GM12878 (cell line): ENCODE measurements at regions of chr19 and their contacts with region 1.

Region 1: DNA sequence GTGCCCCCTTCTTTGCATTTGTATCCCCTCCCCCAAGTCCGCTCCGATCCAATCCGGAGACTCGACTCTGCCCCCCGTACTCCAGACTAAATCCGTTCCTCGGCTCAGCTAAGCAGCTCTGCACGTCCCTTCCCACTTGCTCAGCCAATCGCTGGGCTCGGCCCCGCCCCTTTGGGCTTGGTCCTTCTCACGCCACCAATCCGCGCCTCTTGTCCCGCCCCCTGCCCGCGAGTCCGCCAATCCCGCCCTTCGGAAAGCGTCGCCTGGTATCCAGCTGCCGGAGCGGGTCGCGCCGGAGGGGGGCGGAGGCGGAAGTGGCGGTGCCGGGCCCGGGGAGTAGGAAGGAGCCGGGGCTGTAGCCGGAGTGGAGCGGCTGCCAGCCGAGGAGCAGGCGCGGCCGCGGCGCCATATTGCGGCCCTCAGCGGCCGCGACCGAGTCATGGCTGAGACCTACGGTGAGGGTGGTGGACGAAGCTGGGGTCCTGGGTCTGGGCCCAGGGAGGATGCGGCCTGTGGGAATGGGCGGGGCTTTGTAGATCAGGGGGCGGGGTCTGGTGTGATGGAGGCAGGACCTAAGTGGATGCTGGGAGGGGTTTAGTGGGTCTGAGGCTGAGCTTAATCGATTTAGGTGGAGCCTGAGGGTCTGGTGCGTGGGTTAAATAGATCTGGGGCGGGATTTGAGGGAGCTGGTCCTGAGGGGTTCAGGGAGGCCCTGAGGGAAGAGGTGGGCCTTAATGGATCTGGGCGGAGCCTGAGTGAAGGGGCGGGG is at the start of gene RAB4B:
- DNase-seq: peak; percentile 99
- ATAC-seq: peak; percentile 87
- H3K4me3 ChIP-seq: peak within 1 kb of the TSS; percentile 70
- H3K27ac ChIP-seq: peak within 1 kb of the TSS; percentile 100
- H3K4me1 ChIP-seq: peaks cover 39% of the 10 kb centered on the region
- H3K27me3 ChIP-seq: no peaks in the 10 kb centered on the region
- CTCF ChIP-seq: no peak
- EP300 ChIP-seq: peak in 1 of 2 experiments; percentile 18; a peak in 1 of 4 replicates
- POLR2A ChIP-seq: peak; percentile 95
- RAD21 ChIP-seq: no peak
- polyA plus RNA-seq, gene RAB4B: 0.60 to 3.2 TPM

Region 2: GRCh38 chr19:40640744-40641143 is 137.4 kb before region 1 on chr19:
- CTCF ChIA-PET with region 1: no interaction called
- POLR2A ChIA-PET with region 1: no interaction called
- RAD21 ChIA-PET with region 1: no interaction called
- SMC1A ChIA-PET with region 1: no interaction called
- in situ Hi-C with region 1: no loop called
- intact Hi-C with region 1: no loop called
- DNase-seq: no peak
- ATAC-seq: no peak
- H3K4me3 ChIP-seq: no peak overlapping the region
- H3K27ac ChIP-seq: no peak overlapping the region
- H3K4me1 ChIP-seq: peaks cover 5% of the 10 kb centered on the region; the same call in 1 of the 2 replicates
- H3K27me3 ChIP-seq: no peaks in the 10 kb centered on the region
- CTCF ChIP-seq: no peak
- EP300 ChIP-seq: no peak
- POLR2A ChIP-seq: no peak
- RAD21 ChIP-seq: no peak

Region 3: GRCh38 chr19:40690693-40691420 is 87.3 kb before region 1 on chr19:
- CTCF ChIA-PET with region 1: interaction called, 4 read pairs
- POLR2A ChIA-PET with region 1: interaction called, 10 read pairs
- RAD21 ChIA-PET with region 1: interaction called, 12 read pairs
- SMC1A ChIA-PET with region 1: interaction called, 4 read pairs
- in situ Hi-C with region 1: no loop called
- intact Hi-C with region 1: no loop called
- DNase-seq: peak; percentile 53
- ATAC-seq: peak; percentile 91
- H3K4me3 ChIP-seq: peak overlapping the region; percentile 92
- H3K27ac ChIP-seq: peak overlapping the region; percentile 72
- H3K4me1 ChIP-seq: peaks cover 26% of the 10 kb centered on the region
- H3K27me3 ChIP-seq: no peaks in the 10 kb centered on the region
- CTCF ChIP-seq: no peak
- EP300 ChIP-seq: no peak
- POLR2A ChIP-seq: peak; percentile 81
- RAD21 ChIP-seq: no peak

Region 4: DNA sequence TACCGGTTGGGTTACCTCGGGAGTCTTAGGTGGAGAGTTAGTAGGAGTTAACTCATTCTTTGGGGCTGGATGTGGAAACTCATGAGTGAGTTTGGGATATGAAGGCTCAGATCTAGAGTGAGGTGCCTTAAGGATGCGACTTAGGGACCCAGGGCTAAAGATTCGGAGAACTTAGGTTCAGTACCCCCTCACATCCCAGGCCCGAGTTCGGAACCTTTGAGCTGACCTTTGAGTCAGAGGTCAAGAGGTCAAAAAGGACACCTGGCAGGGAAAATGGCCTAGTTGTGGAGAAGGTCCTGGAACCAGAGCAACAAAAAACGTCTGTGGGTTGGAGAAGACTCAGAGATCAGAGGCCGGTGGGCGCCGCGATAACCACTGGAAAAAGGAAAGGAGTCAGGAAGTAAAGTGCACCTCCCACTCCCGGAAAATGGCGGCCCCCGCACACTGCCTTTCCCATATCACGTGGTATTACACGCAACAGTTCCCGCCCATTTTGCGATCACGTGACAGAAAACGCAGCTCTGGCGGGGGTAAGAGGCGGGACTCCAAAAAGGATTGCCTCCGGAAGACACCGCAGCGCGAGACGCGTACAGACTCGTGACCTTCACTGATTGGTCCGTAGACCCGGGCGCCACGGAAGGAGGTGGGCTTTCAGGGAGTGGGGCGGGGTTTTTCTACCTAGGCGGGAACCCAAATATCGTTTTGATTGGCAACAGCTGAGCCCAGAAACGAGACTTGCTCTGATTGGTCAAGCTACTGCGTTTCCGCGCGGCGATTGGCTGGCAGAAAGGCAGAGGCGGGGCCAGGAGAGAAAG is 27.9 kb before region 1 on chr19 and contains the start of gene ACTMAP:
- CTCF ChIA-PET with region 1: interaction called, 72 read pairs
- POLR2A ChIA-PET with region 1: interaction called, 331 read pairs
- RAD21 ChIA-PET with region 1: interaction called, 291 read pairs
- SMC1A ChIA-PET with region 1: interaction called, 256 read pairs
- in situ Hi-C with region 1: no loop called
- intact Hi-C with region 1: loop called (anchors 1 kb)
- DNase-seq: peak; percentile 99
- ATAC-seq: peak; percentile 88
- H3K4me3 ChIP-seq: peak within 1 kb of the TSS; percentile 94
- H3K27ac ChIP-seq: peak within 1 kb of the TSS; percentile 98
- H3K4me1 ChIP-seq: peaks cover 16% of the 10 kb centered on the region
- H3K27me3 ChIP-seq: no peaks in the 10 kb centered on the region
- CTCF ChIP-seq: no peak
- EP300 ChIP-seq: peak in 1 of 2 experiments; percentile 55; a peak in 1 of 4 replicates
- POLR2A ChIP-seq: peak; percentile 57; the same call in 1 of the 2 replicates
- RAD21 ChIP-seq: no peak
- polyA plus RNA-seq, gene ACTMAP: 4.7 to 8.2 TPM

Region 5: DNA sequence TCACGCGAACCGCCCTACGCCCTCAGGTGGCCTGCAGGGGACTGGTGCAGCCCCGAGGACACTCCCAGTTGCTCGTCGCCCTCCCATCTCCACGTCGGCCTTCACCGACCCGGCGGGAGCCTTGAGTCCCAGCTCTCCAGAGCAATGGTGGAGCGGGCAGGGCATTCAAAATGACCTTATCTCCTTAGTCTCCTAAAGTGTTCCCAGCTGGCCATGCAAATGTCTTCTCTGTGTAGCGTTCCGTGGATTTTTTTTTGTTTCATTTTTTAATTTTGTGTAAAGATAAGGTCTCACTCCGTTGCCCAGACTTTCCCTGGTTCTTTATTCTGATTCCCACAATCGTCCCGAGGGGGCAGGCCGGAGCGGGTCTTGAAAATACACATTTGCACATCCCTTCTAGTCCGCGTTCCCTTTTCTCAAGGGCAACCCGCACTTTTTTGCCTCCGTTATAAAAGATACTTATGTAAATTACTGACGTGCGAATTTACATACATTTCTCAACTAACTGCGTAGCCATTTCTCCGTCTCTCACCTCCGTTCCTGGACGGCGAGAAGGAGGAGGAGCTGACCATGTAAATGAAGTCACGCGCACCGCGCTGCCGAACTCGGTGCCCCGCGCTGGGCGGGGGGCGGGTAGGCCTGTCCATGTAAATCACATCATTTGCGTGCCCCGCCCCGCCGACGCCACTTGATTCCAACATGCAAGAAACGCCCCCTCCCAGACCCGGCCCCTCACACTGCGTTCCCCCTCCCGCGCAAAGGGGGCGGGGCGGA is 20.3 kb after region 1 on chr19:
- CTCF ChIA-PET with region 1: interaction called, 50 read pairs
- POLR2A ChIA-PET with region 1: interaction called, 83 read pairs
- RAD21 ChIA-PET with region 1: interaction called, 56 read pairs
- SMC1A ChIA-PET with region 1: interaction called, 39 read pairs
- in situ Hi-C with region 1: no loop called
- intact Hi-C with region 1: loop called (anchors 1 kb)
- DNase-seq: peak; percentile 97
- ATAC-seq: peak; percentile 91
- H3K4me3 ChIP-seq: peak overlapping the region; percentile 66
- H3K27ac ChIP-seq: peak overlapping the region; percentile 68
- H3K4me1 ChIP-seq: peaks cover 38% of the 10 kb centered on the region
- H3K27me3 ChIP-seq: no peaks in the 10 kb centered on the region
- CTCF ChIP-seq: peak; percentile 46 to 53 (median 48); a peak in 5 of 6 replicates
- EP300 ChIP-seq: 0 out of 4 replicates have a peak, but pooled peaks of 1 of the 2 experiments have one; percentile 31
- POLR2A ChIP-seq: peak; percentile 67
- RAD21 ChIP-seq: peak; percentile 42; the same call in 1 of the 2 replicates

Region 6: GRCh38 chr19:40822161-40822560 is 44.0 kb after region 1 on chr19:
- CTCF ChIA-PET with region 1: interaction called, 20 read pairs
- POLR2A ChIA-PET with region 1: interaction called, 11 read pairs
- RAD21 ChIA-PET with region 1: interaction called, 4 read pairs
- SMC1A ChIA-PET with region 1: interaction called, 7 read pairs
- in situ Hi-C with region 1: no loop called
- intact Hi-C with region 1: no loop called
- DNase-seq: no peak
- ATAC-seq: no peak
- H3K4me3 ChIP-seq: no peak overlapping the region
- H3K27ac ChIP-seq: no peak overlapping the region
- H3K4me1 ChIP-seq: peaks cover 11% of the 10 kb centered on the region
- H3K27me3 ChIP-seq: no peaks in the 10 kb centered on the region
- CTCF ChIP-seq: no peak
- EP300 ChIP-seq: no peak
- POLR2A ChIP-seq: no peak
- RAD21 ChIP-seq: no peak

Region 7: GRCh38 chr19:40995355-40995754 is 217.2 kb after region 1 on chr19:
- CTCF ChIA-PET with region 1: no interaction called
- POLR2A ChIA-PET with region 1: no interaction called
- RAD21 ChIA-PET with region 1: no interaction called
- SMC1A ChIA-PET with region 1: no interaction called
- in situ Hi-C with region 1: no loop called
- intact Hi-C with region 1: no loop called
- DNase-seq: no peak
- ATAC-seq: no peak
- H3K4me3 ChIP-seq: no peak overlapping the region
- H3K27ac ChIP-seq: no peak overlapping the region
- H3K4me1 ChIP-seq: no peaks in the 10 kb centered on the region
- H3K27me3 ChIP-seq: no peaks in the 10 kb centered on the region; a peak in 1 of 4 replicates
- CTCF ChIP-seq: no peak
- EP300 ChIP-seq: no peak
- POLR2A ChIP-seq: no peak
- RAD21 ChIP-seq: no peak